ENCODE measurements at regions of chr9 and their contacts with region 1.

Region 1: DNA sequence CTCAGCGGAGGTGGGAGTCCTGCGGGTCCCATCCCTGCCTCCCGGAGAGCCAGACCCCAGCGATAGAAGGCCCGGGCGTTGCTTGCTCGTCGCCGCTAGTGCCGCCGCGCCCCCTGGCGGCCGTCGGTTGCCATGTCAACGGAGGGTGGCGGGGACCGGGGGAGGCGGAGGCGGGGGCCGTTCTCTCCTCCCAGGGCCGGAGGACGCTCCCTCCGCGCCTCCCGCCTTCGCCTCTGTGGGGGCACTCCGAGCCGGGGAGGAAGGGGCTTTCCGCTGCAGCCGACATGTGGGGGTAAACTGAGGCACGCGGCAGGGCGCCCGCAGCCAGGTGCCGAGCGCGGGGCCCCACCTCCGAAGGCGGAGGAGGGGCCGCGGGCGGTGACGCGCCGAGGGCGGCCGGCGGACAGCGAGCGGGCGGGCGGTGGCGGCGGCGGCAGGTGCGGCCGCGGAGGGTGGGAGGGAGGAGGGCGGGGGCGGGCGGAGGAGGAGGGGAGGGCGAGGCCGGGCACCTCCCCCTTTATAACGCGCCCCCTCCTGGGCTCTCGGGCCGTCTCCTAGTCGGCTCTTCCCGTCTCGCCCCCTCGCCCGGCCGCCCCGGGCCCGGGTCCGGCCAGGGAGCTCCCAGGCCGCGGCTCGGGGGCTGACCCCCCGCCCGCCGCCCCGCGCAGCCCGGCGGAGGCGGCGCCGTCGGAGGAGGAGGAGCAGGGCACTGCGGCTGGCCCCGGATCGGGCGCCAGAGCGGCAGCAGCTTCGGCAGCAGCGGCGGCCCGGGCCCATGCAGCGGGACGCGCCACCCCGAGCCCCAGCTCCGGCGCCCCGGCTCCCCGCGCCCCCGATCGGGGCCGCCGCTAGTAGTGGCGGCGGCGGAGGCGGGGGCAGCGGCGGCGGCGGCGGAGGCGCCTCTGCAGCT is 556 bp upstream of the CDK9 start:
- DNase-seq: peak; percentile 51
- ATAC-seq: peak; percentile 44
- H3K4me3 ChIP-seq: peak overlapping the region; percentile 76 to 99 (median 94); a peak in 5 of 6 replicates
- H3K27ac ChIP-seq: peak overlapping the region; percentile 46
- H3K4me1 ChIP-seq: peaks cover 28% of the 10 kb centered on the region
- H3K27me3 ChIP-seq: 0 out of 5 replicates have a peak, but pooled peaks cover 1 to 13% of the 10 kb centered on the region in 2 experiments
- CTCF ChIP-seq: peak; percentile 93
- EP300 ChIP-seq: no peak
- POLR2A ChIP-seq: peak in 1 of 2 experiments; percentile 26; a peak in 1 of 4 replicates
- RAD21 ChIP-seq: peak; percentile 79

Region 2: GRCh38 chr9:127586537-127586936 is 198.7 kb before region 1 on chr9:
- CTCF ChIA-PET with region 1: interaction called, 5 read pairs
- POLR2A ChIA-PET with region 1: no interaction called
- in situ Hi-C with region 1: no loop called
- intact Hi-C with region 1: loop called (anchors 5 kb)
- DNase-seq: peak; percentile 75
- ATAC-seq: peak; percentile 94
- H3K4me3 ChIP-seq: no peak overlapping the region
- H3K27ac ChIP-seq: no peak overlapping the region
- H3K4me1 ChIP-seq: peaks cover 25% of the 10 kb centered on the region
- H3K27me3 ChIP-seq: no peaks in the 10 kb centered on the region
- CTCF ChIP-seq: peak; percentile 96
- EP300 ChIP-seq: no peak
- POLR2A ChIP-seq: no peak
- RAD21 ChIP-seq: peak; percentile 90

Region 3: GRCh38 chr9:127741831-127742434 is 43.3 kb before region 1 on chr9:
- CTCF ChIA-PET with region 1: no interaction called
- POLR2A ChIA-PET with region 1: interaction called, 4 read pairs
- in situ Hi-C with region 1: loop called (anchors 5 kb)
- intact Hi-C with region 1: loop called (anchors 2 kb)
- DNase-seq: peak; percentile 37
- ATAC-seq: peak; percentile 59
- H3K4me3 ChIP-seq: peak overlapping the region in 1 of 3 experiments; percentile 32; a peak in 1 of 6 replicates
- H3K27ac ChIP-seq: no peak overlapping the region
- H3K4me1 ChIP-seq: peaks cover 22% of the 10 kb centered on the region
- H3K27me3 ChIP-seq: peaks cover 5 to 50% of the 10 kb centered on the region in 2 experiments; a peak in 4 of 5 replicates
- CTCF ChIP-seq: no peak
- EP300 ChIP-seq: no peak
- POLR2A ChIP-seq: no peak
- RAD21 ChIP-seq: no peak

Region 4: DNA sequence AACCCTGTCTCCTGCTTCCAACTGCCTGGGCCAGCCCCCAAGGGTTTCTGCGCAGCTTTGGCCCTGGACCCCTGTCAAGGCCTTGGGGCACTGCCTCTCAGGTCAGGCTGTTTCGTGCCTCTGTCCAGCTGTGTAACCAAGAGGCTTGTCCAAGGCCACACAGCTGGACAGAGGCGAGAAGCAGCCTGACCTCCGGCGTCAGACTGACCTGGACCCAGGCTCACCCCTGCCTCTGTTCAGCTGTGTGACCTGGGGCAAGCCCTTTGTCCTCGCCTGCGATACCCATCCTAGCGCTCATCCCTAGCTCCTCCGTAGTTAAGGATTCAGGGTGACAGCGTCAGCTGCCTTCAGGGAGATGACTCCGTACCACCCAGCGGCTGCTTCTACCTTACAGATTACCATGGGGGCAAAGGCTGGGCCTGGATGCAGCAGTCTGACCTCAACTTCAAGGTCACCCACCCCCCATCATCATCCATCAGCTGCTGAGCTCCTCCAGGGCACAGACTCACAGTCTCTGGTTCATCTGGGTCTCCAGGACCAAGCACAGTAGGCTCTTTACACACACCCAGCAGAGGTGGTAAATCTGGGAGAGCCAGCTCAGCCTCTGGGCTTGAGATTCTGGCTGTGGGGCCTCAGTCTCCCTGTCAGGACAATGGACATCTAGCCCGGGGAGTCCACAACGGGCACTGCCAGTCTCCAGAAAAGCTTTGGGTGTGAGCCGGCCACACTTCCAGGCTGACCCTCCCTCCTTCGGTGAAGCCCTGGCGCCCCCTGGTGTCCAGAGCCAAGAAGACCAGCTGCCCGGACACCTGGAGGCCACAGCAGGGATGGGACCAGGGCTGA is 84.3 kb after region 1 on chr9:
- CTCF ChIA-PET with region 1: no interaction called
- POLR2A ChIA-PET with region 1: no interaction called
- in situ Hi-C with region 1: no loop called
- intact Hi-C with region 1: loop called (anchors 1 kb)
- DNase-seq: peak; percentile 71
- ATAC-seq: peak; percentile 94
- H3K4me3 ChIP-seq: no peak overlapping the region
- H3K27ac ChIP-seq: no peak overlapping the region
- H3K4me1 ChIP-seq: peaks cover 17% of the 10 kb centered on the region
- H3K27me3 ChIP-seq: no peaks in the 10 kb centered on the region
- CTCF ChIP-seq: peak; percentile 96
- EP300 ChIP-seq: no peak
- POLR2A ChIP-seq: no peak
- RAD21 ChIP-seq: peak; percentile 96

Measured in HepG2 (cell line).